ENCODE measurements at regions of chr10 and their contacts with region 1.

Region 1: DNA sequence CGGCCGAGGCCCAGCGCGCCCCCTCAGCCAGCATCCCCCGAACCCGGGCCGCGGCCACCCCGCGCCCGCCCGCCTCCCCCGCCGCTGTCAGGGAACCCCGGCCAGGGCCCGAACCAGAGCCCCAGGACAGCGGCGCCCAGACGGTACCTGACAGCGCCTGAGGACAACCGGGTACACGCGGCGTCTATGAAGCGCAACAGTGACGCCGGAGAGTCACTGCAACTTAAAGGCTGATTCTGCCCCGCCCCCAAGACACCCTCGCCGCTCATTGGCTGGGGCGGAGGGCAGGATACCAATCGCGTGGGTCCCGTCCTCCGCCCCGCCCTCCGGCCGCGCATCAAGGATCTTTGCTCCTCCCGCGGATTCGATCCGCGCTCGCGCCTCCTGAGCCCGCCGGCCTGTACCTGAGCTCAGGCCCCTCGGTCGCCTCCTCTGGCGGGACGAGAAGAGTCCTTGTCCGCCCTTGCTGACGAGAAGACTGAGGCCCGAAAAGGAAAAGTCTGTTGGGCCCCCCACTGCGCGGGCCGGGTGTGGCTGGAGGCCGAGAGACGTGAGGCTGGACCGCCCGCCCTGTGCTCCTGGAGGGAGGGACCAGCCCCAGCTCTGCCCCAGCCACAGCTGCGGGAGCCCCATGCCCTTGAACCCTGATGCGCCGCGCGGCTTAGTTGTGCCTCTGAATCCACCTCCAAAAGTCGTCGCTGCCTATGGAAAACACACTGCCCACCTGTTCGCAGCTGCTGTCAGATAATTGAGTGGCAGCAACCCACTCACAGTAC is at the start of gene OAT:
- DNase-seq: peak; percentile 97 to 99 (median 98)
- H3K4me3 ChIP-seq: peak within 1 kb of the TSS; percentile 59 to 100 (median 92)
- H3K27ac ChIP-seq: peak within 1 kb of the TSS in 58 of 59 donors; percentile 11 to 96 (median 88)
- H3K27me3 ChIP-seq: no peaks in the 10 kb centered on the region
- CTCF ChIP-seq: peak in 27 of 56 donors; percentile 2 to 51 (median 17)
- total RNA-seq, gene OAT: 79.4 to 200 (median 151) TPM

Region 2: GRCh38 chr10:123008439-123009205 is 1410.3 kb before region 1 on chr10 and contains the starts of genes ACADSB and IKZF5:
- intact Hi-C with region 1: loop called in 1 of 2 experiments (anchors 10 kb)
- DNase-seq: peak; percentile 86 to 96 (median 94)
- H3K4me3 ChIP-seq: peak within 1 kb of the TSS; percentile 70 to 100 (median 98)
- H3K27ac ChIP-seq: peak within 1 kb of the TSS; percentile 44 to 98 (median 91)
- H3K27me3 ChIP-seq: no peaks in the 10 kb centered on the region
- CTCF ChIP-seq: peak in 23 of 56 donors; percentile 10 to 48 (median 24)
- total RNA-seq, gene ACADSB: 16.7 to 59.4 (median 42.6) TPM
- total RNA-seq, gene IKZF5: 18.6 to 44.3 (median 28.3) TPM

Region 3: GRCh38 chr10:124354411-124355382 is 64.2 kb before region 1 on chr10:
- intact Hi-C with region 1: no loop called
- DNase-seq: peak in 3 of 10 donors; percentile 12 to 31 (median 19)
- H3K4me3 ChIP-seq: peak overlapping the region in 55 of 59 donors; percentile 1 to 68 (median 40)
- H3K27ac ChIP-seq: peak overlapping the region in 2 of 59 donors; percentile 17 to 33
- H3K27me3 ChIP-seq: peaks cover 0 to 22% (median 0%) of the 10 kb centered on the region in 45 donors
- CTCF ChIP-seq: no peak

Region 4: GRCh38 chr10:124461438-124462347 is 42.8 kb after region 1 on chr10 and contains the start of gene LHPP:
- intact Hi-C with region 1: loop called (anchors 2 to 5 kb)
- DNase-seq: peak; percentile 76 to 95 (median 84)
- H3K4me3 ChIP-seq: peak within 1 kb of the TSS; percentile 63 to 98 (median 81)
- H3K27ac ChIP-seq: peak within 1 kb of the TSS; percentile 53 to 96 (median 89)
- H3K27me3 ChIP-seq: no peaks in the 10 kb centered on the region
- CTCF ChIP-seq: peak in 51 of 56 donors; percentile 10 to 89 (median 64)
- total RNA-seq, gene LHPP: 62.4 to 585 (median 134) TPM

Region 5: GRCh38 chr10:124522933-124523871 is 104.3 kb after region 1 on chr10:
- intact Hi-C with region 1: loop called in 1 of 2 experiments (anchors 10 kb)
- DNase-seq: peak in 1 of 10 donors; percentile 29
- H3K4me3 ChIP-seq: peak overlapping the region in 9 of 59 donors; percentile 3 to 36 (median 33)
- H3K27ac ChIP-seq: peak overlapping the region in 53 of 59 donors; percentile 5 to 85 (median 70)
- H3K27me3 ChIP-seq: no peaks in the 10 kb centered on the region
- CTCF ChIP-seq: no peak

Measured in dorsolateral prefrontal cortex (tissue), 120 donors.